Natural killer cell (primary cell): ENCODE measurements at regions of chr10 and their contacts with region 1.

Region 1: GRCh38 chr10:110076559-110077318 is 69.0 kb downstream of the ADD3 start:
- DNase-seq: peak in 1 of 2 donors; percentile 66
- ATAC-seq: peak; percentile 73 to 89 (median 83)
- H3K4me3 ChIP-seq: peak overlapping the region; percentile 42
- H3K4me3 Mint-ChIP-seq: peak overlapping the region; percentile 94
- H3K27ac ChIP-seq: peak overlapping the region; percentile 85
- H3K27ac Mint-ChIP-seq: peak overlapping the region; percentile 95 to 98
- H3K4me1 ChIP-seq: peaks cover 45% of the 10 kb centered on the region
- H3K4me1 Mint-ChIP-seq: peaks cover 87 to 88% of the 10 kb centered on the region in 2 donors
- H3K27me3 ChIP-seq: no peaks in the 10 kb centered on the region
- H3K27me3 Mint-ChIP-seq: no peaks in the 10 kb centered on the region
- CTCF ChIP-seq: no peak

Region 2: GRCh38 chr10:109922976-109923921 is 153.5 kb before region 1 on chr10 and contains the start of gene XPNPEP1:
- intact Hi-C with region 1: loop called (anchors 5 kb)
- DNase-seq: peak; percentile 82 to 92
- ATAC-seq: peak; percentile 94 to 99 (median 95)
- H3K4me3 ChIP-seq: peak within 1 kb of the TSS; percentile 89
- H3K4me3 Mint-ChIP-seq: peak within 1 kb of the TSS; percentile 88
- H3K27ac ChIP-seq: peak within 1 kb of the TSS; percentile 91
- H3K27ac Mint-ChIP-seq: peak within 1 kb of the TSS; percentile 80 to 89
- H3K4me1 ChIP-seq: peaks cover 41% of the 10 kb centered on the region
- H3K4me1 Mint-ChIP-seq: peaks cover 55 to 57% of the 10 kb centered on the region in 2 donors
- H3K27me3 ChIP-seq: no peaks in the 10 kb centered on the region
- H3K27me3 Mint-ChIP-seq: no peaks in the 10 kb centered on the region
- CTCF ChIP-seq: no peak
- total RNA-seq, gene XPNPEP1: 102 to 118 (median 106) TPM

Region 3: GRCh38 chr10:110007701-110008517 is 68.8 kb before region 1 on chr10 and contains the start of gene ADD3:
- intact Hi-C with region 1: loop called (anchors 2 kb)
- DNase-seq: peak; percentile 89 to 96
- ATAC-seq: peak; percentile 79 to 93 (median 79)
- H3K4me3 ChIP-seq: peak within 1 kb of the TSS; percentile 85
- H3K4me3 Mint-ChIP-seq: no peak within 1 kb of the TSS
- H3K27ac ChIP-seq: peak within 1 kb of the TSS; percentile 78
- H3K27ac Mint-ChIP-seq: peak within 1 kb of the TSS in 1 of 2 donors; percentile 97
- H3K4me1 ChIP-seq: peaks cover 19% of the 10 kb centered on the region
- H3K4me1 Mint-ChIP-seq: peaks cover 41 to 42% of the 10 kb centered on the region in 2 donors
- H3K27me3 ChIP-seq: no peaks in the 10 kb centered on the region
- H3K27me3 Mint-ChIP-seq: no peaks in the 10 kb centered on the region
- CTCF ChIP-seq: no peak
- total RNA-seq, gene ADD3: 341 to 437 (median 344) TPM

Region 4: GRCh38 chr10:110042181-110042580 is 34.6 kb before region 1 on chr10:
- intact Hi-C with region 1: loop called (anchors 5 kb)
- DNase-seq: no peak
- ATAC-seq: peak in 2 of 3 donors; percentile 56 to 58
- H3K4me3 ChIP-seq: no peak overlapping the region
- H3K4me3 Mint-ChIP-seq: peak overlapping the region; percentile 31
- H3K27ac ChIP-seq: peak overlapping the region; percentile 22
- H3K27ac Mint-ChIP-seq: peak overlapping the region; percentile 81 to 86
- H3K4me1 ChIP-seq: no peaks in the 10 kb centered on the region
- H3K4me1 Mint-ChIP-seq: peaks cover 51 to 63% of the 10 kb centered on the region in 2 donors
- H3K27me3 ChIP-seq: no peaks in the 10 kb centered on the region
- H3K27me3 Mint-ChIP-seq: no peaks in the 10 kb centered on the region
- CTCF ChIP-seq: no peak

Region 5: GRCh38 chr10:110118891-110119621 is 42.3 kb after region 1 on chr10:
- intact Hi-C with region 1: loop called (anchors 5 kb)
- DNase-seq: no peak
- ATAC-seq: no peak
- H3K4me3 ChIP-seq: no peak overlapping the region
- H3K4me3 Mint-ChIP-seq: no peak overlapping the region
- H3K27ac ChIP-seq: no peak overlapping the region
- H3K27ac Mint-ChIP-seq: peak overlapping the region; percentile 18 to 59
- H3K4me1 ChIP-seq: no peaks in the 10 kb centered on the region
- H3K4me1 Mint-ChIP-seq: peaks cover 28% of the 10 kb centered on the region in 2 donors
- H3K27me3 ChIP-seq: no peaks in the 10 kb centered on the region
- H3K27me3 Mint-ChIP-seq: no peaks in the 10 kb centered on the region
- CTCF ChIP-seq: no peak